Right cardiac atrium (tissue), 5 donors: ENCODE measurements at regions of chr22 and their contacts with region 1.

Region 1: DNA sequence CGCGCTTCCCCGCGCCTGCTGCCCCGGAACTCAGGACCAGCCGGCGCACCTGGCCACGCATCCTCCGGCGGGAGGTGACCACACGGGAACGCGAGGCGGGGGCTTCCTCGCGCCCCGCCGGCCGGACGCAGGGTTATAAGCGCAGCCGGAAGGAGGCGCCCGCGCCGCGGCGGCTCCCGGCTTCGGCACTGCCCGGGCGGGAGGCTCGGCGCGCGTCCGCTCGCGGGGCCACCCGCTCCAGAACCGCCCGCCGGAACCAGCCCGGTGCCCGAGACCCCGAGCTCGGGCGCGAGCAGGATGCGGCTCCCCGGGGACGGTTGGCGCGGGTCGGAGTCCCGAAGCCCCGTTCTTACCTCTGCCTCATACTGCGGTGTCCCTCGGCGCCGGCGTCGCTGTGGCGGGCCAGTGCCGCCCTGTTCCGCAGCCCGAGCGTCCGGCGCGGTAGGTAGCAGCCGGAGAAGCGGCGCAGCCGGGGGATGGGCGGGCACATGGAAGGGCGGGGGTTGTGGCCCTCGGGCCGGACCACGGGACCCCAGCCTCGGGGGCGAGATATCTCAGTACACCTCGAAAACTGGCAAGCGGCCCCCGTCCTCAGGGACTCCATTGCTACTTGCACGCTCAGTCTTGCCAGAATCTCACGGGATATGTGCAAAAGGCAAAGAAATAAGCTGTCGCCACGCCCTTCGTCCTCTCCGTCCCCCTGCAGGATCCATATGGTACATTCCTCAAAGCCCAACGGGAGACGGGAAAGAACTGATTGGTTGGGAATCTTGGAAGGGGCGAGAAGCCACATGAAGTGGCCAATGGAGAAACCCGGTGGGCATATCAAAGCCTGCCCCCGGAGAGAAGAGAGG is 23.1 kb downstream of the MICAL3 start:
- DNase-seq: peak; percentile 92 to 96 (median 95)
- ATAC-seq: peak; percentile 97 to 98
- H3K4me3 ChIP-seq: peak overlapping the region; percentile 69
- H3K27ac ChIP-seq: peak overlapping the region; percentile 90
- H3K4me1 ChIP-seq: peaks cover 2% of the 10 kb centered on the region
- H3K27me3 ChIP-seq: no peaks in the 10 kb centered on the region

Region 2: GRCh38 chr22:17891481-17892167 is 109.6 kb before region 1 on chr22:
- intact Hi-C with region 1: loop called in 1 of 4 experiments (anchors 10 kb)
- DNase-seq: peak; percentile 45 to 84 (median 80)
- ATAC-seq: peak; percentile 61 to 79
- H3K4me3 ChIP-seq: no peak overlapping the region
- H3K27ac ChIP-seq: peak overlapping the region; percentile 82
- H3K4me1 ChIP-seq: no peaks in the 10 kb centered on the region
- H3K27me3 ChIP-seq: no peaks in the 10 kb centered on the region

Region 3: GRCh38 chr22:17910561-17911311 is 90.5 kb before region 1 on chr22:
- intact Hi-C with region 1: loop called in 2 of 4 experiments (anchors 5 kb)
- DNase-seq: peak; percentile 78 to 88 (median 88)
- ATAC-seq: peak; percentile 90 to 95
- H3K4me3 ChIP-seq: no peak overlapping the region
- H3K27ac ChIP-seq: peak overlapping the region; percentile 95
- H3K4me1 ChIP-seq: peaks cover 24% of the 10 kb centered on the region
- H3K27me3 ChIP-seq: no peaks in the 10 kb centered on the region

Region 4: GRCh38 chr22:17917490-17917983 is 83.7 kb before region 1 on chr22:
- intact Hi-C with region 1: loop called in 2 of 4 experiments (anchors 5 kb)
- DNase-seq: peak; percentile 55 to 77 (median 77)
- ATAC-seq: peak; percentile 46 to 49
- H3K4me3 ChIP-seq: no peak overlapping the region
- H3K27ac ChIP-seq: peak overlapping the region; percentile 34
- H3K4me1 ChIP-seq: peaks cover 27% of the 10 kb centered on the region
- H3K27me3 ChIP-seq: no peaks in the 10 kb centered on the region